ENCODE measurements at regions of chr11 and their contacts with region 1.

Region 1: GRCh38 chr11:34926101-34926830 is 9.8 kb downstream of the PDHX start:
- DNase-seq: no peak
- ATAC-seq: peak; percentile 50
- H3K4me3 Mint-ChIP-seq: no peak overlapping the region
- H3K27ac Mint-ChIP-seq: no peak overlapping the region
- H3K4me1 Mint-ChIP-seq: peaks cover 8% of the 10 kb centered on the region
- H3K27me3 Mint-ChIP-seq: no peaks in the 10 kb centered on the region
- CTCF ChIP-seq: peak; percentile 63

Region 2: DNA sequence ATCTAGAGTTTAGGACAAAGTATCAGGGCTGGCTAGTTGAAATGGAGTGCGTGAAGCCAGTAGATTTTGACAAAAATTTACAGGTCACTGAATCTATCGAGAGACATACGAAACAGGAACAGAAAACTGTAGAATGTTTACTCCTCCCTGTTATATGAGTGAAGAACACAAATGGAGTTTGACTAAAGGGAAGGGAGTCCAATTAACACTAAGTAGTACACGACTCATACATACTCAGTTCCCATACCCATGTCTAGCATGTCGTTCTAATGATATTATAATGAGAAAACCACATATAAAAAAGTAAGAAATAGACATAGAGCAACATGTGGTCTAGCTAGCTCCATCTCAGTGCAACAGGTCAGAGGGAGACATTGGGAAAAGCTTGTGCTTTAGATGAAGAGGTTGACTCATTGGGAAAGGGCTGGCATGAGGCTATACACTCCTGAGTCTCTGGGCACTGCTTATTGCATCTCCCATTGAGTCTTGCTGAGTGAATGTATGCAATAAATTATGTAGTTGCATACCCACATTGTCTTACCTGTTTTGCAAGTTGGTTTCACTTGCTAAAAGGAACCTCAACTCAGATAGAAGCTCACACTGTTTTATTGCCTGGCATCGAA is 256.2 kb after region 1 on chr11:
- CTCF ChIA-PET with region 1: no interaction called
- POLR2A ChIA-PET with region 1: no interaction called
- intact Hi-C with region 1: loop called (anchors 5 kb)
- DNase-seq: no peak
- ATAC-seq: peak; percentile 68
- H3K4me3 Mint-ChIP-seq: peak overlapping the region; percentile 68
- H3K27ac Mint-ChIP-seq: peak overlapping the region; percentile 80
- H3K4me1 Mint-ChIP-seq: peaks cover 79% of the 10 kb centered on the region
- H3K27me3 Mint-ChIP-seq: no peaks in the 10 kb centered on the region
- CTCF ChIP-seq: no peak

Region 3: GRCh38 chr11:35237860-35238715 is 311.8 kb after region 1 on chr11:
- CTCF ChIA-PET with region 1: interaction called, 41 read pairs
- POLR2A ChIA-PET with region 1: no interaction called
- intact Hi-C with region 1: loop called (anchors 1 kb)
- DNase-seq: no peak
- ATAC-seq: peak; percentile 51
- H3K4me3 Mint-ChIP-seq: no peak overlapping the region
- H3K27ac Mint-ChIP-seq: no peak overlapping the region
- H3K4me1 Mint-ChIP-seq: peaks cover 30% of the 10 kb centered on the region
- H3K27me3 Mint-ChIP-seq: no peaks in the 10 kb centered on the region
- CTCF ChIP-seq: no peak

Region 4: DNA sequence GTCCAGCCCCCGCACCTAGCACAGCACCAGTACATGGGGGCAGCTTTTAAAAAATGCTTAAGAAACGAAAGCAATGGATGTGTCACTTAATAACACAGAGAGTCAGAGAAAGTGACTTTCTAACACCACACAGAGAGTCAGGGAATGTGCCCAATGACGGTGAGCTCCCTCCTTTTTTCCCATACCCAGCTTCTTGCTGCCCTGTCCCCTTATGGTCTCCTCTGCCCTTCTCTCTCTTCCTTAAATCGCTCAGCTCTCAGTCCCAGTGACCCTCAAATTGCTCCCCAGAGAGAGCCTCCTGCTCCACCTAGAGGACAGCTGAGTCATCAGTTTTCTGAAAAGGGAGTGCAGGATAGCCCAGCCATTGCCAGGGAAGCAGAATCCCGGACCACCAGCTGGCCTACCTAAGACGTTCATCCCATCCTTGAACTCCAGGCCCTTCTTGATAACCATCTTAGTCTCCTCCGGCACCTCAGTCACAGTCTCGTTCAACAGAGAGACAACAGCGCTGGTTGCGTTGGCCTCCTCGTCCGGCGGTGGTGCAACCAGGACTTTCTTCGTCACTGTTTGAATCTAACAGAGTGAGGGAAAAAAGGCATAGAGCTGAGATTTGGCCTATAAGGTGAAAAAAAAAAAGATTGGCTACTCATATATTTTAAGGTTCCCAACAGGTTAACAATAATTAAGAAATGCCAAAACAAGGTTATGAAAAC is 379.6 kb after region 1 on chr11:
- CTCF ChIA-PET with region 1: interaction called, 29 read pairs
- POLR2A ChIA-PET with region 1: no interaction called
- intact Hi-C with region 1: loop called (anchors 1 kb)
- DNase-seq: no peak
- ATAC-seq: peak; percentile 69
- H3K4me3 Mint-ChIP-seq: no peak overlapping the region
- H3K27ac Mint-ChIP-seq: no peak overlapping the region
- H3K4me1 Mint-ChIP-seq: peaks cover 13% of the 10 kb centered on the region
- H3K27me3 Mint-ChIP-seq: no peaks in the 10 kb centered on the region
- CTCF ChIP-seq: no peak

Region 5: DNA sequence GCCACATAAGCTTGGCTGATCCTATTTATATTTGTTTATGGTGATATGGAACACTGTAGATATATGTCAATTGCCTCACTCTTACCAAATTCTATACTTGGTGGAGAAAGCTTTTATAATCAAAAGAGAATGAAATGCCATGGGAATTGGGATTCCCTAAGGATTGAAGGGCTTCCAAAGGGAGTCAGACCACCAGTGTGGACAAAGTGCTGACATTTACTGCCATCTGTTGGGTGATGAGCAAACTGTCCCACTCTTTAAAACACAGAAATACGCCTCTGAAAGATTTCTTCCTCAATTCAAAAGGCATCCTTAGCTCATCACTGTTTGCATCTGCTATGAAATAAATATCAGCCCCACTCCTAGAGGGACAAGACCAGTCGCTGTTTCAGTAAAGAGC is 486.0 kb after region 1 on chr11:
- CTCF ChIA-PET with region 1: interaction called, 10 read pairs
- POLR2A ChIA-PET with region 1: no interaction called
- intact Hi-C with region 1: no loop called
- DNase-seq: no peak
- ATAC-seq: no peak
- H3K4me3 Mint-ChIP-seq: no peak overlapping the region
- H3K27ac Mint-ChIP-seq: no peak overlapping the region
- H3K4me1 Mint-ChIP-seq: no peaks in the 10 kb centered on the region
- H3K27me3 Mint-ChIP-seq: peaks cover 24% of the 10 kb centered on the region
- CTCF ChIP-seq: no peak

Region 6: DNA sequence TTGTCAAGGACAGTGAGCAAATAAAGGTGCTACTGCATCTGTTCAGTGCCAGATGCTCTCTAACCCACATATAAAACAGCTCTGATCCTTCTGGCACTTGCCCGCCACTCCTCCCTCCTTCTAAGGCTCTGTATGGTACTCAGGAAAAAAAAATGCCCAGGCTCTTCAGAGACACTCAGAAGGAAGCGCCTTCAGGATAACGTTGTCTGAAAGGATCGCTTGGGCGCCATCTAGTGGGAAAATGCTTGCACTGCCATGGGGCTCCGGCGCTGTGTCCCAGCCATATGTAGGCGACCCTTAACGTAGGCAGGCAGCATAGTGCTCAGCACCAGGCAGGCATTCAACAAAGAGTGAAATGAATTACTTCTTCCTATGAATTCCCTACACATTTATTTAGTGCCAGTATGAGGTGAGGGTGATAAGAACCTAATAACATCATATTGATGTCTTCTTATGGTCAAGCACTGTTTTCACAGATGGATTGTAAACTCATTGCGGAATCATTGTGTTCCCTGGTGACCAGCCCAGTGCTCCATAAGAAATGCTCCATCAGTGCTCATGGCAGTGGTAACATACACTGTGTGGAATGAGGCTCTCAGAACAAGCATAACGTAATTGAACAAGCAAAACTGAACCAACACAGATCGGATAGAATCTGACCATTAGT is 559.5 kb after region 1 on chr11:
- CTCF ChIA-PET with region 1: interaction called, 7 read pairs
- POLR2A ChIA-PET with region 1: no interaction called
- intact Hi-C with region 1: loop called (anchors 1 kb)
- DNase-seq: peak; percentile 59
- ATAC-seq: peak; percentile 73
- H3K4me3 Mint-ChIP-seq: no peak overlapping the region
- H3K27ac Mint-ChIP-seq: no peak overlapping the region
- H3K4me1 Mint-ChIP-seq: no peaks in the 10 kb centered on the region
- H3K27me3 Mint-ChIP-seq: peaks cover 22% of the 10 kb centered on the region
- CTCF ChIP-seq: peak; percentile 60

Region 7: GRCh38 chr11:36265793-36266628 is 1339.7 kb after region 1 on chr11:
- CTCF ChIA-PET with region 1: no interaction called
- POLR2A ChIA-PET with region 1: no interaction called
- intact Hi-C with region 1: loop called (anchors 5 kb)
- DNase-seq: peak; percentile 52
- ATAC-seq: peak; percentile 72
- H3K4me3 Mint-ChIP-seq: no peak overlapping the region
- H3K27ac Mint-ChIP-seq: no peak overlapping the region
- H3K4me1 Mint-ChIP-seq: no peaks in the 10 kb centered on the region
- H3K27me3 Mint-ChIP-seq: peaks cover 10% of the 10 kb centered on the region
- CTCF ChIP-seq: no peak